ENCODE measurements at regions of chr1 and their contacts with region 1.

Region 1: DNA sequence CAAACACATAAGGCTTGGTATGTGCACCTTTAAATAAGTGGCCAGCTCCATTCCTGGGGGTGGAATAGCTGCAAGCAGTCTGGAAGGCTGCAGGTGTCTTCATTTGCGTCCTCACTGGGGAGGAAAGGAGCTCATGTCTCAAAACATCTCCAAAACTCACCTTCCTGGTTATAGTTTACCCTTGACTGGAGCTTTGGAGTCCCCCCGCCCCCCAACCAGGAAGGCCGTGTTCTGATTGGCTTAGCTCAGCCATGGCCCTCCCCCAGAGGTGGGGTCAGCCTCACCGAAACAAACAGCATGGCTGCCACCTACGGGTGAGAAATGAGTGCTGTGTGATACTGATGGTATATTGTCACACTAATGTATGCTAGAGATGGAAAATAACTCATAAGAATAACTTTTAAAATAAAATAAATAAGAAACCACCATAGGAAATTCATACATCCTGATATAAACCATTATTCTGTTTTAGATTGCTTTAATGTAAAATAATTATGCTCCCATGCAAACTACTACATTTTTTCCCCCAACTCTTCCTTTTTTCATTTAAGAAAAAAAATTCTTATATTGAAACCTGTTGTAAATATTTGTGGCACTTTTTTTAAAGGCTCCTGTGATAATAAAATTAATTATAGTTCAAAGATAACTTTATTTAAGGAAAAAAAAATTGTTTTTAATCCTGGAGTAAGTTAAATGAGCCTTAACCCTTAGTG is 90.8 kb downstream of the ZP4 start:
- DNase-seq: peak; percentile 78 to 93
- H3K4me3 ChIP-seq: no peak overlapping the region
- H3K4me1 ChIP-seq: 0 out of 2 replicates have a peak, but pooled peaks cover 3% of the 10 kb centered on the region
- H3K27me3 ChIP-seq: no peaks in the 10 kb centered on the region

Region 2: DNA sequence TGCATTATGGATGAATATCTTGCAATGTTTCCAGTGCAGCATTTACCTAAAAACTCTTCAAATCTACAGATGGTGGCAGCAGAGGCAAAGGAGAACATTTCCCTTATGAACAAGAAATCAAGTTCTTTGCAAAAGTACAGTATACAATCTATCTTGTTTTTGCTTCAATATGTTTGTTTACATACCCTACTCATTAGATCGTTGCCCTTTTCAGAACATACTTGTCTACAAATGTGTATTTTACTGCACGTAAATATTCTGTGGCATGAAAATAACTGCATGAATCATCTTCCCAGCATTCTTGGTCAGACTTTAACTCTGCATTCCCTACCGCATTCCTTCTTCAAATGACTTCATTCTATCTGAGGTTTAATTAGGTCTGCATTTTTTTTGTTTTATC is 121.9 kb before region 1 on chr1:
- in situ Hi-C with region 1: loop called (anchors 10 kb)
- DNase-seq: peak; percentile 12 to 30
- H3K4me3 ChIP-seq: no peak overlapping the region
- H3K4me1 ChIP-seq: peaks cover 23% of the 10 kb centered on the region
- H3K27me3 ChIP-seq: no peaks in the 10 kb centered on the region